ENCODE measurements at regions of chr21 and their contacts with region 1.

Region 1: DNA sequence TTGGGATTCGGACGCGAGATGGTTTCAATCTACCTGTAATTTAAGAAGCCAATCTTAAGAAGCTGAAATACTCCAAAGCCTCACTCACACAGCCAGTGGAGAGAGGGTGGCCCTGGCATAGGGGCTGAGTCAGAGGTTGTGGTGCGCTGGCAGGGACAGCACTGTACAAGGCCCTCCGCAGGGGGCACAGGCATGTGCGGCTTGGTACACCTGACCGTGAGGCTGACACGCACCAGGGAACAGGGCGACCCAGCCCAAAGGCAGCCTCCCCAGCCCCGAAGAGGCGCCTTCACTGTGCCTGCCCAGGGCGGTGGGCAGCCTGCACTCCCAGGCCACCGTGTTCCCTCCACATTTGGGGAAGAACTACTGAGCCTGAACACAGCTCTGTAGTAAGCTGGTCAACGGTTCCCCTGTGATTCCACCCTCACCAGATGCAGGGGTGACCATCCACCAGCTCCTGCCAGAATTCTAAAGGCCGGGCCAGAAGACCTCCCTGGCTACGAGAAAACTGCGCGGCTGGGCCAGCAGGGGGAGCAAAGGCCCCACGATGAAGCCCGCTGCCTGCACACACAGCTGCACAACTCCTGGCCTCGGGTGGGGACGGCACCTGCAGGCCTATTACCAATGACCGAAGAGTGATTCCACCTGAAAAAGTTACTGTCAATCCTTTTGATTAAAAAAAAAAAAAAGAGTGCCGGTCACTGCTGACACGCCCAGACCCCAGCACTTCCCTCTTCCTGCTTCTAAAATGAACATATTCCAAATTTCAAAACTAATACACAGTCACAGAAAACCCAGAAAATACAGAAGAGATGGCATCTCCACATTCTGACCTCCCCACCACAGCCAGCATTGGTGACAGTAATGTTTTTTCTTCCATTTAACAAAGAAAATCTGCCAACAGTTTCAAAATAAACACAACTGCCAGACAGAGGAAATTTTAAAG is 49.6 kb upstream of the RIPK4 start:
- DNase-seq: no peak
- H3K4me3 ChIP-seq: no peak overlapping the region
- CTCF ChIP-seq: peak; percentile 94

Region 2: DNA sequence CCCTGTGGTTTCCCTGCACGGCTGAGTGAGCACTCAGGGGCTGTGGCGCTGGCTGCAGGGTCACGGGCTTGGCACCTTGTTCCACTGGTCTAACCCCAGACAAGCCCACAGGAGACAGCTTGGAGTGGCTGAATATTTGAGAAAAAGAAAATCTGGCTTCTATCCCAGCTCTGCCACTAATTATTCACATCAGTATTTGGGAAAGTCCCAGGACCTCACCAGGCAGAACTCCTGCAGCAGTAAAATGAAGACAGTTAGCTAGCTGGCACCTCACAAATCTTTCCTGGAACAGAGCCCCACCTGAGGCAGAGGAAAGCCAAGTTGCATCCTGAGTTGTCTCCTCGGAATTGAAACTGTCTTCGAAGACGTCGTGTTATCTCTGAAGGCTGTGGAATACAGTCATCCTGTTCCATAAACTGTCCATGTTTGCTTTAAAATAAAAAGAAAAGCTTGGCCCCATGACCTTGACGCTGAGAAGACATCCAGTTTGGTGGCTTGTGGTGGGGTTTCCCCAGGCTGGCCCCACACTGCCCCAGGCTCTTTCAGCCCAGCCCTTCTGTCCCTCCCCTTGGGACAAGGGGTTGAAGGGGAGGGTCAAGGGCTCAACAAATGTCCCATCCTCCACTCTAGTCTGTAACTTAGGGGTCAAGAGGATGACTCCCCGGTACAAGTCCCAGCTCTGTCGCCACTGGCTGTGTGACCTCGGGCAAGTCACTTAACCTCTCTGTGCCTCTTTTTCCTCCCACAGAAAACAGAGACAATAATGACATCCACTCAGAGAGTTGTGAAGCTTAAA is 214.7 kb before region 1 on chr21:
- CTCF ChIA-PET with region 1: interaction called, 256 read pairs
- POLR2A ChIA-PET with region 1: no interaction called
- DNase-seq: no peak
- H3K4me3 ChIP-seq: no peak overlapping the region
- CTCF ChIP-seq: no peak

Region 3: DNA sequence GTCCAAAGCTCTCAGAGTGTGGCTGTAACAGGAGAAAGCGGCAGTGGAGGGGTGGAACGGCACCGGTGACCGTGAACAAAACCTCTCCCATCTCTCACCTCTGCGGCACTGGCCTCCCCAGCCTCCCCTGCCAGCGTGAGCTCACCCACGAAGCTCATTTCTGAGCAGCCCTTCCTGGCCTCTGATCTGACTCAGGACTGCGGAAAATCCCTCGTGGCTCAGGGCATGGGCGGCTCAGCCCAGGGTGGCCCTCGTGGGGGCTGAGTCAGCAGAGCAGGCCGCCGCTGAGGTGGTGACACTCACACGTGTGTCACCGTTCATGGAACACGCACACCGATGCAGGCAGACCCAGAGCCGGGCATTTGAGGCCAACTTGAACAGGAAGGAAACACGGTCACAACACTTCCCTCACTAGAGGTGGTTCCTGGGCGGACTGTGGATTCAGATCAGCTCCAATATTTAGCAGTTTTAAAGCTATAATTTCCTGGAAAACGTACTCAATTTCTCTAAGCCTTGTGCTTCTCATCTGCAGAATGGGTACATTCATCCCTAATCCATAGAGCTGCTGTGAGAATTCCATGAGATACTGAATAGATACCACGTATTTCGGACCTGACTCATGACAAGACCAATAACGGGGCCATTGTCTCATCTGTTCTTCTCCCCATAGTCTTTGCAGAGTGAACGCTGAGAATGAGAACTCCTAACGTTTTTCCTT is 193.5 kb before region 1 on chr21:
- CTCF ChIA-PET with region 1: interaction called, 15 read pairs
- POLR2A ChIA-PET with region 1: no interaction called
- DNase-seq: no peak
- H3K4me3 ChIP-seq: no peak overlapping the region
- CTCF ChIP-seq: no peak

Region 4: GRCh38 chr21:41737656-41738324 is 78.7 kb before region 1 on chr21:
- CTCF ChIA-PET with region 1: no interaction called
- POLR2A ChIA-PET with region 1: no interaction called
- DNase-seq: no peak
- H3K4me3 ChIP-seq: no peak overlapping the region
- CTCF ChIP-seq: no peak

Region 5: GRCh38 chr21:41777951-41778874 is 38.3 kb before region 1 on chr21:
- CTCF ChIA-PET with region 1: interaction called, 20 read pairs
- POLR2A ChIA-PET with region 1: no interaction called
- DNase-seq: peak; percentile 10
- H3K4me3 ChIP-seq: no peak overlapping the region
- CTCF ChIP-seq: peak; percentile 88

Region 6: GRCh38 chr21:41802684-41803083 is 13.8 kb before region 1 on chr21:
- CTCF ChIA-PET with region 1: interaction called, 22 read pairs
- POLR2A ChIA-PET with region 1: no interaction called
- DNase-seq: no peak
- H3K4me3 ChIP-seq: no peak overlapping the region
- CTCF ChIP-seq: no peak

Region 7: GRCh38 chr21:41840880-41841279 is 24.4 kb after region 1 on chr21:
- CTCF ChIA-PET with region 1: interaction called, 16 read pairs
- POLR2A ChIA-PET with region 1: no interaction called
- DNase-seq: no peak
- H3K4me3 ChIP-seq: no peak overlapping the region
- CTCF ChIP-seq: no peak

Region 8: GRCh38 chr21:42117229-42117966 is 300.9 kb after region 1 on chr21:
- CTCF ChIA-PET with region 1: interaction called, 51 read pairs
- POLR2A ChIA-PET with region 1: no interaction called
- DNase-seq: no peak
- H3K4me3 ChIP-seq: peak overlapping the region; percentile 32; the same call in 1 of the 2 replicates
- CTCF ChIP-seq: peak; percentile 83